ENCODE measurements at regions of chr10 and their contacts with region 1.

Region 1: DNA sequence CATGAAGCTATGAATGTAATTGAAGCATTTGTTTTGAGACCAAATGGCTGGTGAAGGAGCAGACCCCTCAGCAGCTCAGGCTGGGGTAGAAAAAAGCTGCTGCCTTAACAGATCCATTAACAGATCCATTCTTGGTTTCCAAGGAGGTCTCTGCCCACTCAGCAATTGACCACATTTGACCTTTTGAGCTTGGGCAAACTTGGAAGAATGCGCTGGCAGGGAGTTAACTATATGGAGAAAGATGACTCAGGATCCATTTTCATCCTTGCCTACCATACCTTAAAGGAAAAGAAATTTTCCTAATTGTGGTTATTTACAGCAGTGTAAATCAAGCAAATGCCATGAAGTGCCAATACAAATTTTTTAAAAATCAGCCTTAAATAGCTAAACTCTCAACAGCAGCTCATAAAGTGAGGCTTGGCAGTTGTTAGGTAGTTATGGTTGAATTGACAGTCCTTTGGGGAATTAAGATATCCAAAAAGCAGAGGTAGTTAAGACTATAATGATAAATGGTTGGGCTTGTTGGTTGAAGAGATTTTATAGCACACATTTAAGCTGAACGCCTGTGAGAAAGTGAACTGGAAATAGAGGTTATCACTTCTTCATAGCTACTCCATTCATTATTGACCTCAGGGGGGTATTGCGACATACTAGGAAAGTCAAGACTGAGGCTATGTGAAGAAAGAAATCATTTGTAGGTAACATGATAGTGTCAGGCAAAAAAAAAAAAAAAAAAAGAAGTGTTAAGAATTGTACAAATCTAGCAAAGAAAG is 83.9 kb downstream of the MKX start:
- DNase-seq: no peak
- H3K4me3 ChIP-seq: no peak overlapping the region
- H3K27ac ChIP-seq: no peak overlapping the region
- H3K4me1 ChIP-seq: no peaks in the 10 kb centered on the region
- H3K27me3 ChIP-seq: no peaks in the 10 kb centered on the region
- CTCF ChIP-seq: no peak
- POLR2A ChIP-seq: no peak

Region 2: DNA sequence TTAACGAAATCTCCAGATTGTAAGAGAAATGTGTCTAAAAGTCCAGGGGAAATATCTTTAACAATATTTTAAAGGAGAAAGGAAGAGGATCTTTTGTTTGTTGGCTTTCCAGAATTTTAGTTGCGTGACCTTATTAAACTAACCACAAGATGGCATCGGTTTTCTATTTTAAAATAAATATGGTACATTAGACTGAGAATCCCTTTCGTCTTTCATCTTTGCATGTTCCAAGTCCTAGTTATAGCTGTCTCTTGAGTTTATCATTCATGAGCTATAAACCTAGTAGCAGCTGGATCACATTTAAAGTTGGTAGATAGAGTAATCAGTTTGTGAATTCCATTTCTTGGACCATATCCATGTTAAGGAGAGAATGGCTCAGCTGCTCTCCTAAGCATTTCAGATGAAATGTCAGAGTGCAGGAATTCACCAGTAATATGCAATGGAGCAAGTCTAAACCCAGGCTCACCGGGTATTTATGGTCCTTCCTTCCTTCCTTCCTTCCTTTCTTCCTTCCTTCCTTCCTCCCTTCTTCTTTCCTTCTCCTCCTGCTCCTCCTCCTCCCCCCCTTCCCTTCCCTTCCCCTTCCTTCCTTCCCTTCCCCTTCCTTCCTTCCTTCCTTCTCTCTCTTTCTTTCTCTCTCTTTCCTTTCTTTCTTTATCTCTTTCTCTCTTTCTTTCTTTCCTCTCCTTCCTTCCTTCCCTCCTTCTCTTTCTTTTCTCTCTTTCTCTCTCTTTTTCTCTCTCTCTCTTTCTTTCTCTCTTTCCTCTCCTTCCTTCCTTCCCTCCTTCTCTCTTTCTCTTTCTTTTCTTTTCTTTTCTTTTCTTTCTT is 215.4 kb before region 1 on chr10:
- intact Hi-C with region 1: loop called (anchors 5 to 10 kb)
- DNase-seq: no peak
- H3K4me3 ChIP-seq: no peak overlapping the region
- H3K27ac ChIP-seq: no peak overlapping the region
- H3K4me1 ChIP-seq: no peaks in the 10 kb centered on the region
- H3K27me3 ChIP-seq: no peaks in the 10 kb centered on the region
- CTCF ChIP-seq: peak; percentile 23 to 60 (median 40)
- POLR2A ChIP-seq: no peak

Region 3: GRCh38 chr10:27558612-27559020 is 103.1 kb before region 1 on chr10:
- intact Hi-C with region 1: loop called in 1 of 2 experiments (anchors 10 kb)
- DNase-seq: peak; percentile 55 to 79 (median 62)
- H3K4me3 ChIP-seq: no peak overlapping the region
- H3K27ac ChIP-seq: no peak overlapping the region
- H3K4me1 ChIP-seq: no peaks in the 10 kb centered on the region
- H3K27me3 ChIP-seq: no peaks in the 10 kb centered on the region
- CTCF ChIP-seq: peak; percentile 39 to 83 (median 76)
- POLR2A ChIP-seq: no peak

Region 4: GRCh38 chr10:27724287-27724686 is 62.6 kb after region 1 on chr10:
- intact Hi-C with region 1: loop called in 1 of 2 experiments (anchors 5 kb)
- DNase-seq: peak in 1 of 7 donors; percentile 3
- H3K4me3 ChIP-seq: no peak overlapping the region
- H3K27ac ChIP-seq: no peak overlapping the region
- H3K4me1 ChIP-seq: no peaks in the 10 kb centered on the region
- H3K27me3 ChIP-seq: no peaks in the 10 kb centered on the region
- CTCF ChIP-seq: peak in 3 of 6 experiments; percentile 8 to 22 (median 20)
- POLR2A ChIP-seq: no peak